ENCODE measurements at regions of chr5 and their contacts with region 1.

Region 1: DNA sequence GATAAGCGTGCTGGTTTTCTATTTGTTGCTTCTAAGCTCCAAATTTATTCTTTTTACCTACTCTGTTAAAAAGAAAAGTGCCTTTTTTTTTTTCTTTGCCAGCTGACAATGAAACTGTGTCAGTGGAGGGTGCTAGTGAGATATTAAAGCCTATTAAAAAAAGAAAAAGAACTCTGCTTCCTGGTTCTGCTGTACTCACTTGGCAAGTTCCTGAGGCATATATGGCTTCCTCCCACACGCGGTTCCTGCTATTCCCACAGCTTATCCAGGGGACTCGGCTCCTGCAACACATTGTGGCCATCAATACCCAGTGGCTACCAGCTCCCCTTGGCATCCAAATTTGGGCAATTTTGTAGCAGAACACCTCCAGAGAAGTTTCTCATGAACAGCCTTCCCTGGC is 1977.7 kb upstream of the CDH9 start:
- DNase-seq: peak; percentile 7
- ATAC-seq: peak; percentile 40; the same call in 1 of the 2 replicates
- H3K4me3 ChIP-seq: no peak overlapping the region
- H3K27ac ChIP-seq: no peak overlapping the region
- H3K4me1 ChIP-seq: no peaks in the 10 kb centered on the region
- H3K27me3 ChIP-seq: no peaks in the 10 kb centered on the region
- CTCF ChIP-seq: 0 out of 2 replicates have a peak, but pooled peaks have one; percentile 14

Region 2: DNA sequence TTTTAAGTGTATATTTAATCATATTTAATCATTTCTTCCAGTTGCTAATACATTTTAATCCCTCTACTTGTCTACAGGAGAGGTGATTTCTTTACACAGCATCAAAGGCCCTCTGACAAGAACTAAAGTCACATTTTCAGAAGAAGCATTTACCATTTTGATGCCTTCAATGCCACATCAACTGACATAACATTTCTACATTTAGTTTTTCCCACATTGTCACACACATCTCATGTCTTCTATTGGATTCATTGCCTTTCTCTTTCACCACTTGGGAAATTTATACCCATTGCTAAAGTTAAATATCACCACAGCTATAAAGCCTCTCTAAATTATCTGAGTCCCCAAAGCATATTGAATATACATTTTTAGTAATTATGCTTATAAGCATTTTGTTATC is 70.2 kb before region 1 on chr5:
- CTCF ChIA-PET with region 1: no interaction called
- POLR2A ChIA-PET with region 1: no interaction called
- intact Hi-C with region 1: no loop called
- DNase-seq: no peak
- ATAC-seq: no peak
- H3K4me3 ChIP-seq: no peak overlapping the region
- H3K27ac ChIP-seq: no peak overlapping the region
- H3K4me1 ChIP-seq: no peaks in the 10 kb centered on the region
- H3K27me3 ChIP-seq: no peaks in the 10 kb centered on the region
- CTCF ChIP-seq: no peak

Region 3: GRCh38 chr5:28975508-28975907 is 40.6 kb before region 1 on chr5:
- CTCF ChIA-PET with region 1: no interaction called
- POLR2A ChIA-PET with region 1: no interaction called
- intact Hi-C with region 1: no loop called
- DNase-seq: peak; percentile 57
- ATAC-seq: peak; percentile 76
- H3K4me3 ChIP-seq: no peak overlapping the region
- H3K27ac ChIP-seq: peak overlapping the region; percentile 52
- H3K4me1 ChIP-seq: peaks cover 7% of the 10 kb centered on the region
- H3K27me3 ChIP-seq: no peaks in the 10 kb centered on the region
- CTCF ChIP-seq: no peak

Region 4: DNA sequence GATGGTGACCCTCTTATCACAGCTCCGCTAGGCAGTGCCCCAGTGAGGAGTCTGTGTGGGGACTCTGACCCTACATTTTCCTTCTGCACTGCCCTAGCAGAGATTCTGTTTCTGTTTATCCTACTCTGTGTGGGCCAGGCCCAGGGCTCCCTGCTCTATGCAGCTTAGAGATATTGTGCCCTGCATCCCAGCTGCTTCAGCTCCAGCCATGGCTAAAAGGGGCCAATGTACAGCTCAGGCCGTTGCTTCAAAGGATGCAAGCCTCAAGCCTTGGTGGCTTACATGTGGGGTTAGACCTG is 53.0 kb after region 1 on chr5:
- CTCF ChIA-PET with region 1: no interaction called
- POLR2A ChIA-PET with region 1: no interaction called
- intact Hi-C with region 1: no loop called
- DNase-seq: no peak
- ATAC-seq: no peak
- H3K4me3 ChIP-seq: no peak overlapping the region
- H3K27ac ChIP-seq: no peak overlapping the region
- H3K4me1 ChIP-seq: no peaks in the 10 kb centered on the region
- H3K27me3 ChIP-seq: no peaks in the 10 kb centered on the region
- CTCF ChIP-seq: no peak

Region 5: GRCh38 chr5:29079771-29080170 is 63.7 kb after region 1 on chr5:
- CTCF ChIA-PET with region 1: no interaction called
- POLR2A ChIA-PET with region 1: no interaction called
- intact Hi-C with region 1: no loop called
- DNase-seq: peak; percentile 30
- ATAC-seq: no peak
- H3K4me3 ChIP-seq: no peak overlapping the region
- H3K27ac ChIP-seq: no peak overlapping the region
- H3K4me1 ChIP-seq: peaks cover 13% of the 10 kb centered on the region
- H3K27me3 ChIP-seq: no peaks in the 10 kb centered on the region
- CTCF ChIP-seq: no peak; the same call in 1 of the 2 replicates

Region 6: GRCh38 chr5:29811914-29812679 is 796.0 kb after region 1 on chr5:
- CTCF ChIA-PET with region 1: no interaction called
- POLR2A ChIA-PET with region 1: no interaction called
- intact Hi-C with region 1: loop called (anchors 10 kb)
- DNase-seq: peak; percentile 42
- ATAC-seq: peak; percentile 76
- H3K4me3 ChIP-seq: no peak overlapping the region
- H3K27ac ChIP-seq: no peak overlapping the region
- H3K4me1 ChIP-seq: no peaks in the 10 kb centered on the region
- H3K27me3 ChIP-seq: no peaks in the 10 kb centered on the region
- CTCF ChIP-seq: peak; percentile 59

Measured in PC-3 (cell line).